ENCODE measurements at regions of chr16 and their contacts with region 1.

Region 1: GRCh38 chr16:79677799-79678577 is 77.5 kb upstream of the MAF start:
- DNase-seq: no peak
- ATAC-seq: no peak
- H3K4me3 ChIP-seq: no peak overlapping the region
- H3K27ac ChIP-seq: no peak overlapping the region
- H3K4me1 ChIP-seq: no peaks in the 10 kb centered on the region
- H3K27me3 ChIP-seq: no peaks in the 10 kb centered on the region
- CTCF ChIP-seq: no peak
- POLR2A ChIP-seq: no peak

Region 2: DNA sequence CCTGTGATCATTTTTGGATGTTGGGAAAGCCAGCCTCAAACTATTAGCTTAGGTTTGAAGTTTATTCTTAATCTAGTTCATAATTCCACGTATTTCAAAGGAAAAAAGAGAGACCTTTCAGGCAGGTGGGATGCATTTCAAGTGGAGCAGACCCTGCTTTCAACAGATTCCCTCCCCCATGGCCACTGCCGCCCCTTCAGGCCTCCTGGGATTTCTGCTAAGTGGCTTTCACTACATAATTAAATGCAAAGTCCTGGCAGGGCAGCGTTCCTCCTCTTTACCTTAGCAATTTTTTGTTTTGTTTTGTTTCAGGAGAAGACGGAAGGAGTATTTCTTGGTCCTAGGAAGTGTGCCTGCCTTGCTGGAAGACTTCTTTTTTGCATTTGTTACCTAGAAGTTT is 114.1 kb before region 1 on chr16:
- intact Hi-C with region 1: no loop called
- DNase-seq: no peak
- ATAC-seq: no peak
- H3K4me3 ChIP-seq: no peak overlapping the region
- H3K27ac ChIP-seq: peak overlapping the region in 2 of 3 donors; percentile 66 to 82
- H3K4me1 ChIP-seq: peaks cover 0 to 54% (median 15%) of the 10 kb centered on the region in 4 donors
- H3K27me3 ChIP-seq: no peaks in the 10 kb centered on the region
- CTCF ChIP-seq: no peak
- POLR2A ChIP-seq: no peak

Region 3: GRCh38 chr16:79613009-79613408 is 65.0 kb before region 1 on chr16:
- intact Hi-C with region 1: loop called in 1 of 2 experiments (anchors 10 kb)
- DNase-seq: no peak
- ATAC-seq: peak in 1 of 4 donors; percentile 35
- H3K4me3 ChIP-seq: no peak overlapping the region
- H3K27ac ChIP-seq: no peak overlapping the region
- H3K4me1 ChIP-seq: no peaks in the 10 kb centered on the region
- H3K27me3 ChIP-seq: no peaks in the 10 kb centered on the region
- CTCF ChIP-seq: no peak
- POLR2A ChIP-seq: no peak

Region 4: DNA sequence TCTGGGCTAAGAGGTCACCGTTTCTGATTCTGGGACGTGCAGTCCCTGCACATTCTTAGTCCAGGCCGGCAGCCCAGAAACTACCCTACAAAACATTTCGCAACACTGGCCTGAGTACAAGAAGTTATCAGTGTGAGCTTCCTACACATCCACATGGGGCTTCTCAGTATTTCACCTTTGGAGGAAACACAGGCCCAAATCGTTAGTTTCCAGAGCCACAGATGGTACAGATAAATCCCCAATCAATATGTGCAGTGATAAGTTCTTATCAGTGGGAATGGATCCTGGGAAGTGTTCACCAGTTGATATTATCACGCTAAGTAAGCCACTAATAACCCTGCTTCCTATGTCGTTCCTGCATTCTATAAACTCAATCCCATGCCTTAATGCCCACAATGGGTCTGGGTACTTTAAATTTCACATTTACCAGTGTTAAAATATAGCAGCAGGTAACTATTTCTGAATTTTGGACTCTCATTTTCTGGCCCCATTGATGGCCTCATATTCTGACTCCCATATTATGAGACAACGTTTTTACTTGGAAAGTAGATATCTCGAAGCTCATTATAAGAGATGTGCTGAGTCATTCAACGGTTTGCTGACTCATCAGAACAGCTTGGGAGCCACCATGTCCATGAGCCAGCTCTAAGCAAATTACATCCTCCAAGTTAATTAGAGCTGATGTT is 292.7 kb after region 1 on chr16:
- intact Hi-C with region 1: no loop called
- DNase-seq: peak; percentile 69 to 85 (median 80)
- ATAC-seq: peak; percentile 96 to 99 (median 97)
- H3K4me3 ChIP-seq: no peak overlapping the region
- H3K27ac ChIP-seq: peak overlapping the region; percentile 22 to 62 (median 61)
- H3K4me1 ChIP-seq: peaks cover 0 to 31% (median 9%) of the 10 kb centered on the region in 4 donors
- H3K27me3 ChIP-seq: no peaks in the 10 kb centered on the region
- CTCF ChIP-seq: no peak
- POLR2A ChIP-seq: no peak

Measured in right lobe of liver (tissue), 6 donors.